ENCODE measurements at regions of chr11 and their contacts with region 1.

Region 1: DNA sequence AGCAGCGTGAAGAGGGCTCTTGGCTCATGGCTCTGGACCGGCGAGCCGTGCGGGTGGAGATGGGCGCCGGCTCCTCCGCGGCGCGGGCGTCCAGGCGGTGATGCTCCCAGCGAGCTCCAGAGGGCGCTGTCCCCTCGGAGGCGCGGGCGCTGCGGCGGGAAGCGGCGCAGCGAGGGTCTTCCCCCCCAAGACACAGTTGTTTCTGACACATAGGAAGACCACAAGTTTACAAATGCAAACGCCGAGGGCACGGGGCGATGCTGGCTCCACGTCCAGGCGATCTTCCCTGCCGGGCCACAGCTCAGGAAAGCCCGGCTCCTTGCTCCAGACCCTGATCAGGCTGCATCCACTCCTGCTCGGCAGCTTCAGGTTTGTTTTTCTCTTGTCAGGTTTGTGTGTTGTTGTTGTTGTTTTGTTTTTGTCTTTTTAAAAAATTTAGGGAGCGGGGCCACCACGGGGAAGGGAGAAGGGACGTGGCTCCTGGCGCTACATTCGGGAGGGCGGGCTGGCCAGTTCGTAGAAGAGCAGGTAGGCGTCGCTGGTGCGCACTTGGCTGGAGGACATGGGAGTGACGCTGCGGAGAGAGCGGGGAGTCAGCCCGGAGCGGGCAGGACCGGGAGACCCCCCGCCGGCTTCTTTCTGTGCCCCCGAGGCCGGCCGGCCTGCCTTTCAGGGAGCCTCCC is 10.0 kb upstream of the MFRP start:
- DNase-seq: peak; percentile 87
- H3K4me3 ChIP-seq: peak overlapping the region; percentile 49
- H3K27ac ChIP-seq: no peak overlapping the region
- H3K4me1 ChIP-seq: no peaks in the 10 kb centered on the region
- H3K27me3 ChIP-seq: no peaks in the 10 kb centered on the region
- CTCF ChIP-seq: peak; percentile 90

Region 2: GRCh38 chr11:119373921-119374631 is 17.6 kb after region 1 on chr11:
- intact Hi-C with region 1: loop called (anchors 2 kb)
- DNase-seq: peak; percentile 86
- H3K4me3 ChIP-seq: no peak overlapping the region
- H3K27ac ChIP-seq: no peak overlapping the region
- H3K4me1 ChIP-seq: peaks cover 12% of the 10 kb centered on the region
- H3K27me3 ChIP-seq: no peaks in the 10 kb centered on the region
- CTCF ChIP-seq: peak; percentile 91

Region 3: DNA sequence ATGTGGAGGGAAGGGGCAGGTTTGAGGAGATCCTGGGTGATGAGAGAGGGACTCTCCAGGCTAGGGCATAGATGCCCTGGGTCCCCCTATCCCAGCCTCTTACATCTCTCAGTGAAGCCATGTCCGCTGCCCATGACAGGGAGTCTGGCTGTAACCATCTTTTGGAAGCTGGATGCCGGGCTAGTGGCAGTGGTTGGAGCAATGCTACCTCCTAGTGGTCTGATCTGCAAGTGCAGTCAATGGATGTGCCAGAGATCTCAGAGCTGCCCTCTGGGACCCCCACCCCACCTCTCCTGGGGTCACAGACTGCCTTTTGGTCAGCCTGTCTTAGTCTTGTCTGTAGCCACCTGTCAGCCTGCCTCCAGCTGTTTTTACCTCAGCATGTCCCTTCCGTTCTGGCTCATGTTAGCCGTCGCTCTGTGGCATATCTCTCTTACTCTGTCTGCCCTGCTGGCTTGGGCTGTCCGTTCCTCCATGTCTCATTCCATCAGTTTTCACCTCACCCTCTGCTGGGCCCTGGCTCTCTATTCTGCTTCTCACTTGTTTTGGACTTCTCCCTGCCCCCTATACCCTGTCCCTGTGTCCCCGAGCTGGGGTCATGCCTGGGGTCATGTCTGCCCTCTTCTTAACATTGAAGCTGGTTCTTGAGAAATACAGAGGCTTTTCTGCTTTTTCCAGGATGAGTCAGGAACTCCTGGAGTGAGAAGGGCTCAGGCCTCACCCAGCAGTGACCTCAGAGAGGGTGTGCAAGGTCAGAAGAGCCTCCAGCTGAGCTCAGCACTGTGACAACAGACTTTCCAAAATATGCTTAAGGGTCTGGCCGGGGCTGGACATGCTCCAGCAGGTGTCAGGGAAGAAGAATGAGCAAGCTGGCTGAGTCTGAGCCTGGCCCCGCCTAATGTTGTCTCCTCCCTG is 118.4 kb after region 1 on chr11:
- intact Hi-C with region 1: loop called (anchors 2 kb)
- DNase-seq: peak; percentile 59
- H3K4me3 ChIP-seq: no peak overlapping the region
- H3K27ac ChIP-seq: no peak overlapping the region
- H3K4me1 ChIP-seq: no peaks in the 10 kb centered on the region
- H3K27me3 ChIP-seq: no peaks in the 10 kb centered on the region
- CTCF ChIP-seq: peak; percentile 70

Region 4: DNA sequence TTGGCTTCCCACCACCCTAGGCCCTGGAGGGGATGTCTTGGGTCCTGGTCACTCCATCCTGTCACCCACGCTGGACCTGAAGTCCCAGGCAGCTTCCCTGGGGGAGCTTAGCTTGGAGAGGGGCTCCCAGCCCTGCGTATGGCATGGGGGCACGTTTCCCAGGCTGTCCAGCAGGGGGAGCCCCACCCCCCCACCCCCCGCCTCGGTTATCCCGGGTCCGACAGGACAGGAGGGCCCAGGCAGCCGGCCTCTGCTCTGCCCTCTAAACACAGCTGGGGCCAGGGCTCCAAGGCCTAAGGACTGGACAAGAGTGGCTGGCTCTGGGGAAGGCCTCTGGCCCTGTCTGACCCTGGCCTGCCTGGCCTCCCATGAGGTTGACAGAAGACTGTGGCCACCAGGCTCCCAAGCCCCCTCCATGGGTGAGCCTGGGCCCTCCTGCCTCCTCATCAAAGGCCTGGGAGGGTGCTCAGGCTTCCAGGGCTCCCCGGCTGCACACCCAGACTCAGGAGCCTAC is 267.7 kb after region 1 on chr11:
- intact Hi-C with region 1: no loop called
- DNase-seq: no peak
- H3K4me3 ChIP-seq: no peak overlapping the region
- H3K27ac ChIP-seq: no peak overlapping the region
- H3K4me1 ChIP-seq: no peaks in the 10 kb centered on the region
- H3K27me3 ChIP-seq: no peaks in the 10 kb centered on the region
- CTCF ChIP-seq: peak; percentile 59

Region 5: GRCh38 chr11:119673759-119674336 is 317.4 kb after region 1 on chr11:
- intact Hi-C with region 1: no loop called
- DNase-seq: peak; percentile 25
- H3K4me3 ChIP-seq: no peak overlapping the region
- H3K27ac ChIP-seq: no peak overlapping the region
- H3K4me1 ChIP-seq: no peaks in the 10 kb centered on the region
- H3K27me3 ChIP-seq: no peaks in the 10 kb centered on the region
- CTCF ChIP-seq: no peak